ENCODE measurements at regions of chr1 and their contacts with region 1.

Region 1: GRCh38 chr1:182962554-182963115 is 9.7 kb upstream of the SHCBP1L start:
- DNase-seq: peak; percentile 95
- H3K4me3 Mint-ChIP-seq: peak overlapping the region; percentile 63
- H3K27ac Mint-ChIP-seq: peak overlapping the region; percentile 98
- H3K4me1 Mint-ChIP-seq: peaks cover 13% of the 10 kb centered on the region
- H3K27me3 Mint-ChIP-seq: no peaks in the 10 kb centered on the region
- CTCF ChIP-seq: peak; percentile 98

Region 2: GRCh38 chr1:182974506-182975191 is 12.0 kb after region 1 on chr1:
- CTCF ChIA-PET with region 1: interaction called, 8 read pairs
- POLR2A ChIA-PET with region 1: interaction called, 10 read pairs
- intact Hi-C with region 1: no loop called
- DNase-seq: no peak
- H3K4me3 Mint-ChIP-seq: no peak overlapping the region
- H3K27ac Mint-ChIP-seq: no peak overlapping the region
- H3K4me1 Mint-ChIP-seq: peaks cover 7% of the 10 kb centered on the region
- H3K27me3 Mint-ChIP-seq: no peaks in the 10 kb centered on the region
- CTCF ChIP-seq: no peak

Region 3: GRCh38 chr1:183159960-183160359 is 197.3 kb after region 1 on chr1:
- CTCF ChIA-PET with region 1: interaction called, 3 read pairs
- POLR2A ChIA-PET with region 1: interaction called, 4 read pairs
- intact Hi-C with region 1: loop called (anchors 1 kb)
- DNase-seq: peak; percentile 99
- H3K4me3 Mint-ChIP-seq: peak overlapping the region; percentile 48
- H3K27ac Mint-ChIP-seq: no peak overlapping the region
- H3K4me1 Mint-ChIP-seq: peaks cover 27% of the 10 kb centered on the region
- H3K27me3 Mint-ChIP-seq: no peaks in the 10 kb centered on the region
- CTCF ChIP-seq: no peak

Region 4: GRCh38 chr1:183209533-183210158 is 247.0 kb after region 1 on chr1:
- CTCF ChIA-PET with region 1: interaction called, 9 read pairs
- POLR2A ChIA-PET with region 1: interaction called, 7 read pairs
- intact Hi-C with region 1: loop called (anchors 1 kb)
- DNase-seq: peak; percentile 96
- H3K4me3 Mint-ChIP-seq: no peak overlapping the region
- H3K27ac Mint-ChIP-seq: peak overlapping the region; percentile 94
- H3K4me1 Mint-ChIP-seq: peaks cover 46% of the 10 kb centered on the region
- H3K27me3 Mint-ChIP-seq: no peaks in the 10 kb centered on the region
- CTCF ChIP-seq: no peak

Region 5: GRCh38 chr1:183234660-183235476 is 272.2 kb after region 1 on chr1:
- CTCF ChIA-PET with region 1: interaction called, 7 read pairs
- POLR2A ChIA-PET with region 1: interaction called, 9 read pairs
- intact Hi-C with region 1: loop called (anchors 1 kb)
- DNase-seq: peak; percentile 100
- H3K4me3 Mint-ChIP-seq: peak overlapping the region; percentile 71
- H3K27ac Mint-ChIP-seq: peak overlapping the region; percentile 86
- H3K4me1 Mint-ChIP-seq: peaks cover 49% of the 10 kb centered on the region
- H3K27me3 Mint-ChIP-seq: no peaks in the 10 kb centered on the region
- CTCF ChIP-seq: peak; percentile 83

Region 6: DNA sequence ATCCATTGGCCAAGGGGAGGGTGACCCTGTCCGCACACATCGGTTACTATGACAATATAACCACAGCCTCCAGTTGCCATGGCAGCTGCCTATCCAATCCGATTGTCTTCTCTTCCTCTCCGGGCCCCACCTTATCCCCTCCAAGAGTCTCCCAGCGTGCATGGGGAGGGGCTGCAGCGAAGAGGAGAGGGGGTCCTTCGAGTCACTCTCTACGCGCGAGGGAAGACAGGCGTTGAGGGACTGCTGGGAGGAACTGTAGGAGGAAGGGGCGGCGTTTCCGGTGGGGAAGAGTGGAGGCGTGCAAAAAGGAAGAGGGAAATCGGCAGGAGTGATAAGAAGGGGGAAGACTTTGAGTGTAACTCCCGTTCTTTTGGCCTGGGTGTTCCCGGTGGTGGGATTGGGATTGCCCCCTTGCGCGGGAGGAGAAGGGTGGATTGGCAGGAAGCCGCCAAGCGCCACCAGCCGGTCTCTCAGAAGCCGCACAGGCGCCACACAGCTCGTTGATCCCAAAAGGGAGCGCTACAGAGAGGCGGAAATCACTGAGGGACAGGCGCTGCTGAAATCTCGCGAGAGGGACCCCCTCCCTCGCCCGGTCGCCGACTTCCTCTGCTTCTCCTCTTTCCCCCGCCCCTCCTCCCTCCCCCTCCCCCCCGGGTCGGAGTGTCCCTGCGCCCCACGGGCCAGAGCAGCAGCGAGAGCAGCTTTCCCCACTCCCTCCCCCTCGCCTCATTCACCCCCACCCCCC is 509.3 kb after region 1 on chr1:
- CTCF ChIA-PET with region 1: interaction called, 3 read pairs
- POLR2A ChIA-PET with region 1: interaction called, 3 read pairs
- intact Hi-C with region 1: loop called (anchors 5 kb)
- DNase-seq: peak; percentile 98
- H3K4me3 Mint-ChIP-seq: peak overlapping the region; percentile 86
- H3K27ac Mint-ChIP-seq: peak overlapping the region; percentile 98
- H3K4me1 Mint-ChIP-seq: peaks cover 21% of the 10 kb centered on the region
- H3K27me3 Mint-ChIP-seq: no peaks in the 10 kb centered on the region
- CTCF ChIP-seq: no peak

Region 7: GRCh38 chr1:183622884-183623785 is 660.5 kb after region 1 on chr1:
- CTCF ChIA-PET with region 1: no interaction called
- POLR2A ChIA-PET with region 1: interaction called, 3 read pairs
- intact Hi-C with region 1: loop called (anchors 5 kb)
- DNase-seq: peak; percentile 86
- H3K4me3 Mint-ChIP-seq: no peak overlapping the region
- H3K27ac Mint-ChIP-seq: peak overlapping the region; percentile 65
- H3K4me1 Mint-ChIP-seq: peaks cover 35% of the 10 kb centered on the region
- H3K27me3 Mint-ChIP-seq: no peaks in the 10 kb centered on the region
- CTCF ChIP-seq: peak; percentile 97